ENCODE measurements at regions of chr1 and their contacts with region 1.

Region 1: GRCh38 chr1:26035959-26036755 is 9.8 kb downstream of the SLC30A2 start:
- DNase-seq: peak; percentile 74
- H3K4me3 ChIP-seq: peak overlapping the region; percentile 65 to 85 (median 81)
- H3K27ac ChIP-seq: no peak overlapping the region
- H3K4me1 ChIP-seq: peaks cover 15% of the 10 kb centered on the region
- H3K27me3 ChIP-seq: peaks cover 0 to 3% of the 10 kb centered on the region in 2 experiments
- CTCF ChIP-seq: peak; percentile 98 to 99
- POLR2A ChIP-seq: no peak

Region 2: DNA sequence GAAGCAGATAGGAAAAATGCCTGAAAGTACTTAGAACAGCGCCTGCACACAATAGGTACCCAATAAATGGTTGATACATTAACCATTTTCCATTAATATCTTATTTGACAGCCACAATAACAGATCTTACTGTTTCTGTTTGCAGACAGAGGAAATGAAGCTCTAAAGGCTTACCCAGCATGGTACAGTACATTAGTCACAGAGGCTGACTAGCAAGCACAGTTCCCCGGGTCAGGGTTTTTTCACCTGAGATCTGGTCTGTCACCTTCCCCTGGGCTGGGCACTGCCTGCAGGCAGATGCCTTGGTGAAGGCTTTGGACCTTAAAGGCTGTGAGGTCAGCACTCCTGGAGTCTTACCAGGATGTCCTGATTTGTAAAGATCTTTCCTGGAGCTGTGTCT is 28.4 kb after region 1 on chr1:
- CTCF ChIA-PET with region 1: interaction called, 11 read pairs
- POLR2A ChIA-PET with region 1: no interaction called
- dilution Hi-C with region 1: no loop called
- intact Hi-C with region 1: no loop called
- DNase-seq: no peak
- H3K4me3 ChIP-seq: no peak overlapping the region
- H3K27ac ChIP-seq: no peak overlapping the region
- H3K4me1 ChIP-seq: no peaks in the 10 kb centered on the region
- H3K27me3 ChIP-seq: peaks cover 7 to 10% of the 10 kb centered on the region in 2 experiments
- CTCF ChIP-seq: no peak
- POLR2A ChIP-seq: no peak

Region 3: GRCh38 chr1:26083246-26083645 is 47.1 kb after region 1 on chr1:
- CTCF ChIA-PET with region 1: no interaction called
- POLR2A ChIA-PET with region 1: no interaction called
- dilution Hi-C with region 1: no loop called
- intact Hi-C with region 1: no loop called
- DNase-seq: no peak
- H3K4me3 ChIP-seq: no peak overlapping the region
- H3K27ac ChIP-seq: no peak overlapping the region
- H3K4me1 ChIP-seq: no peaks in the 10 kb centered on the region
- H3K27me3 ChIP-seq: peaks cover 0 to 4% of the 10 kb centered on the region in 2 experiments
- CTCF ChIP-seq: no peak
- POLR2A ChIP-seq: no peak

Region 4: DNA sequence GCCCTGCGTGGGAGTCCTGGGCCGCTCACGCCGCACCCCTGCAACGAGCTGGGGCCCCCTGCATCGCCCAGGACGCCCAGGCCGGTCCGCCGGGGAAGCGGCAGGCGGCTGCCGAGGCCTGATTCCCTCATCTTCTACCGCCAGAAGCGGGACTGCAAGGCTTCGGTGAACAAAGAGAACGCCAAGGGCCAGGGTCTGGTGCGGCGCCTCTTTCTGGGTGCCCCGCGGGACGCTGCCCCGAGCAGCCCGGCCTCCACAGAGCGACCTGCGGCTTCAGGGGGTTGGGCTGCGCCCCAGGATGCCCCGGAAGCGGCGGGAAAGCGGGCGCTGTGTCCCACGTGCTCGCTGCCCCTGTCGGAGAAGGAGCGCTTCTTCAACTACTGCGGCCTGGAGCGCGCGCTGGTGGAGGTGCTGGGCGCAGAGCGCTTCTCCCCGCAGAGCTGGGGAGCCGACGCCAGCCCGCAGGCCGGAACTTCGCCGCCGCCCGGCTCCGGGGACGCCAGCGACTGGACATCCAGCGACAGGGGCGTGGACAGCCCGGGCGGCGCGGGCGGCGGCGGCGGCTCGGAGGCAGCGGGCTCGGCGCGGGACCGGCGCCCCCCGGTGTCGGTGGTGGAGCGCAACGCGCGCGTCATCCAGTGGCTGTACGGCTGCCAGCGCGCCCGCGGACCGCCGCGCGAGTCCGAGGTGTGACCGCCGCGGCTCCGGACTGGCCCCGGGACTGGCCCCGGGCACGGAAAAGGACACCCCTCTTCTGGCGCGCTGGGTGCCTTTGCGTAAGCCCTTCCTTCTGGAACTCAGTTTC is 125.5 kb after region 1 on chr1:
- CTCF ChIA-PET with region 1: interaction called, 7 read pairs
- POLR2A ChIA-PET with region 1: no interaction called
- dilution Hi-C with region 1: no loop called
- intact Hi-C with region 1: loop called (anchors 1 kb)
- DNase-seq: peak; percentile 46
- H3K4me3 ChIP-seq: peak overlapping the region in 2 of 3 experiments; percentile 20 to 29
- H3K27ac ChIP-seq: no peak overlapping the region
- H3K4me1 ChIP-seq: peaks cover 34% of the 10 kb centered on the region
- H3K27me3 ChIP-seq: no peaks in the 10 kb centered on the region
- CTCF ChIP-seq: peak in 1 of 2 donors; percentile 10
- POLR2A ChIP-seq: no peak

Region 5: DNA sequence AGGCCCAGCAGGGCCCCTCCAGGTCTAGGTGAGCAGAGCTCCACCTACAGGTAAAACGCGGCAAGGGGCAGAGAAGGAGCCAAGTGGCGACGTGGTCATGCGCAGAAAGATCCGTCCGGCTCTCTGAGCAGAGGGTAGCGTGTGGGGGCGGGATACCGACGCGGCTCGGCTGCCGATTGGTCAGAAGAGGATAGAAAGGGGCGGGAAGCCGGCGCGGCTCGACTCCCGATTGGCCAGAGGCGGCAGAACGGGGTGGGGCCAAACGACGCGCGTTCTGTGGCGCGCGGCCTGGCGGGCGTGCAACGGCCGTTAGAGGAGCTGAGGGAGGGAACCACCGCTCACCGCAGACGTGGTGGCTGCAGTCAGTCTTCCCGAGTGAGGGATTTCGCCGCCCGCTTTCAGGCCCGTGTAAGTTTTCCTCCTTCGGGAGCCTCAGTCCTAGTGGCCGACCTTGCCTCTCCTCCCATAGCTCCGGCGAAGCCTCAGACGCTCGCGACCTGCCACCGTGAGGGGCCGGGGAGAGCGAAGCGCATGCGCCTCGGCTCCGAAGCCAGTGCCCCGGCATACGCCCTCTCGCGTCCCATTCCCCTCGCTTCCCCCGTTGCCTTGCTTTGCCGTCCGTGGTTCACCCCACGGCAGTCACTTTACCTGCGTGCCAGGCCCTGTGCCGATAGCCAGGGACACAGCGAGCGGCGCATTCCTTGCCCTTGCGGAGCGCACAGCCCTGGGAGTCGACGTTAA is 197.9 kb after region 1 on chr1 and contains the start of gene CEP85:
- CTCF ChIA-PET with region 1: interaction called, 21 read pairs
- POLR2A ChIA-PET with region 1: no interaction called
- dilution Hi-C with region 1: no loop called
- intact Hi-C with region 1: loop called (anchors 2 kb)
- DNase-seq: peak; percentile 98
- H3K4me3 ChIP-seq: peak within 1 kb of the TSS; percentile 35 to 78 (median 65)
- H3K27ac ChIP-seq: peak within 1 kb of the TSS; percentile 9
- H3K4me1 ChIP-seq: peaks cover 12% of the 10 kb centered on the region
- H3K27me3 ChIP-seq: no peaks in the 10 kb centered on the region
- CTCF ChIP-seq: peak; percentile 87 to 92
- POLR2A ChIP-seq: peak; percentile 81
- total RNA-seq, gene CEP85: 16.2 and 17.8 TPM in 2 replicates

Region 6: GRCh38 chr1:26363549-26364448 is 327.6 kb after region 1 on chr1:
- CTCF ChIA-PET with region 1: interaction called, 13 read pairs
- POLR2A ChIA-PET with region 1: no interaction called
- dilution Hi-C with region 1: no loop called
- intact Hi-C with region 1: no loop called
- DNase-seq: peak; percentile 67
- H3K4me3 ChIP-seq: no peak overlapping the region
- H3K27ac ChIP-seq: no peak overlapping the region
- H3K4me1 ChIP-seq: no peaks in the 10 kb centered on the region
- H3K27me3 ChIP-seq: peaks cover 18 to 23% of the 10 kb centered on the region in 2 experiments
- CTCF ChIP-seq: peak; percentile 96 to 99
- POLR2A ChIP-seq: no peak